Vagina (tissue), 2 donors: ENCODE measurements at regions of chr13 and their contacts with region 1.

Region 1: GRCh38 chr13:32315238-32316027 is at the starts of genes BRCA2 and ZAR1L:
- DNase-seq: peak in 1 of 2 donors; percentile 93
- H3K4me3 ChIP-seq: peak within 1 kb of the TSS; percentile 59 to 92
- H3K27ac ChIP-seq: peak within 1 kb of the TSS; percentile 95
- H3K4me1 ChIP-seq: peaks cover 6% of the 10 kb centered on the region
- H3K27me3 ChIP-seq: no peaks in the 10 kb centered on the region
- CTCF ChIP-seq: peak in 1 of 3 experiments; percentile 16
- POLR2A ChIP-seq: peak in 1 of 2 donors; percentile 32
- total RNA-seq, gene BRCA2: 3.9 TPM
- total RNA-seq, gene ZAR1L: not detected

Region 2: DNA sequence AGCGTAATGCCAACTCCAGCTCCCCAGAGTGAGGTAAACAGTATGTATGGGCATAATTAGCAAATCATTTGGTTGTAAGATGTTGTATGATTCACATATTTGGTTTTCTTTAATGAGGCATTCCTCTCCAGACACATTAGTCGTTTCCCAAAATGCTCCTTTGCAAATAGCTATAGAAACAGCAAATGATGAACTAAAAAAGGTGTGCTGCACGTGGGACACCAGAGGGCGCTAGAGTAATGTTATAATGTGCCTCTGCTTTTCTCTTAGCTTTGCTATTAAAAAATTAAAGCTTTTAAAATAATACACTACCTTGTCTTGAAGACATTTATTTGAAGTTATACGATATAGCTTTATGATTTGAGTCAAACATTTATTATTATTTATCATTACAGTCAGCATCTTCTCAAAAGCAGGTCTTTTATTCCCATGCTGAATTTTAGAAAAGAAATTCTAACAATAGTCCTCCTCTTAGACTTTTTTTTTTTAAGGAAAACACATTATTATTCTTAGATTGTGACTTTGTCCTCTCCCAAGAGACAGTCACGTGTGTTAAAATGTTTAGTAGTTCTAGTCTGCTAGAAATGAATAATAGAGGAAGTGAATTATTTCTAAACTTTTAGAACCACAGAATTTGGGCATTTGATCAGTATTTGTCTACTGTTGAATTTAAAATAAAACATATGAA is 405.4 kb before region 1 on chr13:
- intact Hi-C with region 1: loop called (anchors 10 kb)
- DNase-seq: no peak
- H3K4me3 ChIP-seq: no peak overlapping the region
- H3K27ac ChIP-seq: no peak overlapping the region
- H3K4me1 ChIP-seq: no peaks in the 10 kb centered on the region
- H3K27me3 ChIP-seq: no peaks in the 10 kb centered on the region
- CTCF ChIP-seq: peak; percentile 59 to 73 (median 71)
- POLR2A ChIP-seq: no peak